Posterior vena cava (tissue), 2 donors: ENCODE measurements at regions of chr4 and their contacts with region 1.

Region 1: GRCh38 chr4:113539408-113539807 is 222.1 kb downstream of the CAMK2D start:
- DNase-seq: no peak

Region 2: DNA sequence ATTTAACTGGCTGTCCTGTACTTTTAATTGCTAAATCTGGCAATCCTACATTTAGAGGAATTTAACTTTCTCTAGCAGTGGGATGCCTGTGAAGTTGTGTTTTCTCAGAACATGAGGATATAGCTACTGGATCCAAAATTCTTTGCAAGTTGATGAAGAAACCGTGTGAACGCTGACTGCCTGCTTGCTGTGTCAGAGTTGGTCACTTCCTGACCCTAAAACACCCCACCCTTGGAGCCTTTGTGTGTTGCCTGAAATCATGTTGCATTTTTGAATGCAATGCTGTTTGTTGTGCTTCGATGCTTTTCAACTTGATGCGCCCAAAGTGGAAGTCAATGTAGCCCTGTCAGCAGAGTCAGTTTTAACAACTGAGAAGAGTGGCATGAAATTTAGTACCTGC is 278.7 kb before region 1 on chr4:
- intact Hi-C with region 1: no loop called
- DNase-seq: no peak

Region 3: DNA sequence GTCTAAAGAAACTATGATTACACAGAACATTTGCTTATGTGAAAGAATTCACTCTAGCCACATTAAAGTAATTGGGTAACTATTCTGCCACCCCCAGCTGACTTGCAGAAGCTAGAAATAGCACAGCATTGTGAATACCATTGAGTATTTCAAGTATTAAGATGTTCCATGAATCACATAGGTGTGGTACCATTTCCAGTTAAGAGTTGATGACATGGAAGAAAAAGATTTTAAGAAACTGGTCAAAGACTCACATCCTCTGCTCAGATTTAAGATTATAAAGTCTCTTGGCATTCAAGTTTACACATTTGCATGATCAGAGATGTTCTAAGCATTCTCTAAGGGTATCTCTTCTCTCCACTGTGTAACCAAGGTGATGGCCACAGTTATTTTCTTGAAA is 65.4 kb before region 1 on chr4:
- intact Hi-C with region 1: loop called in 1 of 2 experiments (anchors 10 kb)
- DNase-seq: no peak

Region 4: GRCh38 chr4:113555868-113556267 is 16.5 kb after region 1 on chr4:
- intact Hi-C with region 1: no loop called
- DNase-seq: peak; percentile 85